AG04449 (cell line): ENCODE measurements at regions of chr19 and their contacts with region 1.

Region 1: GRCh38 chr19:12965017-12965811 is 4.2 kb upstream of the DAND5 start:
- DNase-seq: no peak
- H3K4me3 ChIP-seq: peak overlapping the region; percentile 63
- CTCF ChIP-seq: peak; percentile 100

Region 2: DNA sequence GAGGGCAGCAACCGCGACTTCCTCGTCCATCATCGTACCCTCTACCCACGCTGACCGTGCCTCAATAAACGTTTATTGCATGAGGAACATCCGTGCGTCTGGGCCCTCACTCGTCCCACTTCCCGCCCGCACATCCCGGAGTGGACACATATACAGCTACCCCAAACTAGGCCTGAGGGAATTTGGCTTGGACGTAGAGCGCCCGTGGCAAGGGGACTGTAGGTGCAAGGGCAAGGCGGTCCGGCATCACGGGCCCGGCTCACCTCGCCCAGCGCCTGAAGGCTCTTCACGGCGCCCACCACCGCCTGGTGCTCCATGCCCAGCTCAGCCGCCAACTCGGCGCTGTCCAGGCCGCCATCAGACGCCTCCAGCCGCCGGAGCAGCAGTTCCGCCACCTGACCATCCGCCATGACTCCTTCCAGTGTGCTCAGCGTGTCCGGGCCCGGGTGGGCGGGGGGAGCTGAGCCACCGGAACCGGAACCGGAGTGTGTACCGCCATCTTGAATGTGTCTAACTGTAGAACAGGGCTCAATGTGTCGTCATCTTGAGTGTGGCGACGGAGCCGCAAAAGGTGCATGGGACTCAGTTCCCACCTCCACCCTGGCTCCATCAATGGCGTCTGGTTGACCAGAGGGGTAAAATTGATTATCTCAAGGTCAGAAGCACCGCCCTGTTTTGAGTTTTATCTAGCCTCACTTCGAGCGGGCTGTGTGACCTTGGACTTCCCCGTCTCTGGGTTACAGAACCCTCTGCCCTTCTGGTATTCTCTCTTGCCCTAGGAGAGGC is 31.7 kb before region 1 on chr19 and contains the start of gene FARSA:
- CTCF ChIA-PET with region 1: interaction called, 20 read pairs
- POLR2A ChIA-PET with region 1: no interaction called
- DNase-seq: no peak
- H3K4me3 ChIP-seq: peak within 1 kb of the TSS; percentile 96
- CTCF ChIP-seq: no peak

Region 3: DNA sequence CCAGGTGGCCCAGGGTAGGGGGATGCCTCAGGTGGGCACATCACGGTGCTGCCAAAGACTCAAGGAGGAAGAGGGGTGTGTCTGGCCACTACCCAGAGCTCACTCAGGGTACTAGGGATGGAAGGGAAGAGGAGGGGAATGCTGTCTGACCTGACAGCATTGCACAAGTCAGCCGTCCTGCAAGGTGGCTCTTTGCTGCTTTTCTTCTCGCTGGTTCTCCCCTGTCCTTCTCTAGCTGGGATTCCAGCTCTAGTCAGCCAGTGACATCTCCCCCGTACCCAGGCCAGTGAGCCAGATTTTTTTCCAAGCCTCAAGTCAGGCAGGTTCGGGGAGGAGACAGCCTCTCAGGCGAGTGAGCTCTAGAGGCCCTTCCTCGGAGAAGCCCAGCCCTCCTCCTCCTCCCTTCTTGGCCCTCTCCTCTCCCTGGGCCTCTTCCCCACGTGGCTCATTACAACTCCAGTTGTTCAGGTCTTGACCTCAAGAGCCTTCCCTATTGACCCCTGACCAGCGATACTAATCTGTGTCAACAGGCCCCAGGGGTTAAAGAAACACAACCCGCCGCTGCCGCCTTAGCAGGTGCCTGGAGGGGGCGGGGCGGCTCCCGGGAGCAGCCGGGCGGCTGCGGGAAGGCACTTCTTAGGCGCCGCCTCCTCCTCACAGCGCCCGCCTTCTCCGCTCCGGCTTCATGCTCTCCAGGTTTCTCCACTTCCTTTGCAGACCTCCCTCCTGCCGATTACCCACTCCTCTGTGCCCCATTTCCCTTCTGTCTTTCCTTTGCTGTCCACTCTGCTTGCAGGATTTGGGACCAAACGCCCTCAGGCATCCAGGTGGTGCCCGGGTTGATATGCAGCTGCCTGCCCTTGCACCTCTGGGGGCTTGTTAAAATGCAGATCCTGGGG is 86.3 kb after region 1 on chr19:
- CTCF ChIA-PET with region 1: interaction called, 20 read pairs
- POLR2A ChIA-PET with region 1: no interaction called
- DNase-seq: no peak
- H3K4me3 ChIP-seq: no peak overlapping the region
- CTCF ChIP-seq: no peak

Region 4: DNA sequence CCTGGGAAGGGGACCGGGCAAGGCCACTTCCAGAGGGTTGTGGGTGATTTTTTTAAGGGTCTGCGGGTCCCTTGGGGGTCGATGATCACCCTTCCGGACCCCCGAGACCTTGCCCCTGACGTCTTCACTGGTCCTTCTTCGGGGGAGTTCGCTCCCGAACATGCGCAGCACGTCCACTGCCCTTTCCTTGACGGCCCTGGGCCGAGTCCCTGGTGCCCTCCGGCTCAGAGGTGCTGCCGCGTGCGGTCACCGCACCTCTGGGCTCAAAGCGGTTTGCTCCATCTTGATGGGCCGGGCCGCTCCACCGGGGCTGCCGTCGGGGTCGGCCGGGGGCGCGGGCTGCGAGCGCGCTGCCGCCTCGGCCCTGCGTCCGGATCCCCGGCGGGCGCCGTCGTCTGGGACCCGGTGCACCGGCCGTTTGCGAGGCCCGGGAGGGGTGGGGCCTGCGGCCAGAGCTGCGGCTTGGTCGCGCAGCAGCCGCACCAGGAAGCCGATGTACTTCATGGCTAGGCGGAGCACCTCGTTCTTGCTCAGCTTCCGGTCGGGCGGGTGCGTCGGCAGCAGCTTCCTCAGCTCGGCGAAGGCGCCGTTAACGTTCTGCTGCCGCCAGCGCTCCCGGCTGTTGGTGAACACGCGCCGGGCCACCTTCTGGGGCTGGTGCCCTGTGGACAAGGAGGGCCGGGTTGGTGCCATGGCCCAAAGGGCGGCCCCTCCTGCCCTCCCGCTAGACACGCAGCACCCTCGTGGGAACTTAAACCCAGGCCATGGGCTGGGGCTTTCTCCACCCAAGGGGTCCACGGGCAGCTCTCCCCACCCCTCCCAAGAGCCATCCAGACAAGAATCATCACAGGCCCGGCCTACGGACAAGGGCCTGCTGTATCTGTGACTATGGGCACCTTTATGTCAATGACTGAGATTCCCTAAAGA is 134.1 kb after region 1 on chr19:
- CTCF ChIA-PET with region 1: interaction called, 153 read pairs
- POLR2A ChIA-PET with region 1: no interaction called
- DNase-seq: no peak
- H3K4me3 ChIP-seq: no peak overlapping the region
- CTCF ChIP-seq: no peak

Region 5: DNA sequence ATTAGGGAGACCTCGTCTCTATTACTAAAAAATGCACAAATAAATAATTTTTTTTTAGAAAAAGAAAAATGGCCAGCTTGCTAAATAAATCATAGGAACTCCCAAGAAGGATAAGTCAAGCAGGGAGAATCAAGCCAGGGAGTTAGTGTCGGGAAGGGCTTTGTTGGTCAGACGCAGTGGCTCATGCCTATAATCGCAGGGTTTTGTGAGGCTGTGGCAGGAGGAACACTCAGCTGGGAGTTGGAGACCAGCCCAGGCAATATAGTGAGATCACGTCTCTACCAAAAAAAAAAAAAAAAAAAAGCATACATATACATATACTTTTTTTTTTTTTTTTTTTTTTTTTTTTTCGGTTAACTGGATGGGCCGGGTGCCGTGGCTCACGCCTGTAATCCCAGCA is 161.8 kb after region 1 on chr19:
- CTCF ChIA-PET with region 1: interaction called, 14 read pairs
- POLR2A ChIA-PET with region 1: no interaction called
- DNase-seq: no peak
- H3K4me3 ChIP-seq: no peak overlapping the region
- CTCF ChIP-seq: no peak

Region 6: DNA sequence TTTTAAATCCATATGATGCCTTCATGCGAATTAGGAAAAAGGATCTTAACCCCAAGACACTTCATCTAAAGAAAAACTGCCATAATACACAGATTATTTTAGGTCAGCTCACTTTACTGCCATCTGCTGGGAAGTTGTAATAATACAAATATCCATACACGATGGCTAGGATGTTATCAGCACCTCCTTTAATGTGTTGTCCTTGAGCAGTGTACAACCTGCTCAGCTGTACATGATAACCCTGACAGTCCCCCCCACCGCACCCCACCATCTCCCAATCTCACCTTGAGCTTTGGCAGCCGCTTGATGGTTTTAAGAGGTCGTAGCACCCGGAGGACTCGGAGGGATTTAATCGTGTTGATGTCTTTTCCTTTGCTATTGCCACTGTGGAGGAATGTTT is 297.2 kb after region 1 on chr19:
- CTCF ChIA-PET with region 1: interaction called, 43 read pairs
- POLR2A ChIA-PET with region 1: no interaction called
- DNase-seq: no peak
- H3K4me3 ChIP-seq: no peak overlapping the region
- CTCF ChIP-seq: peak; percentile 48